ENCODE measurements at regions of chr5 and their contacts with region 1.

Region 1: DNA sequence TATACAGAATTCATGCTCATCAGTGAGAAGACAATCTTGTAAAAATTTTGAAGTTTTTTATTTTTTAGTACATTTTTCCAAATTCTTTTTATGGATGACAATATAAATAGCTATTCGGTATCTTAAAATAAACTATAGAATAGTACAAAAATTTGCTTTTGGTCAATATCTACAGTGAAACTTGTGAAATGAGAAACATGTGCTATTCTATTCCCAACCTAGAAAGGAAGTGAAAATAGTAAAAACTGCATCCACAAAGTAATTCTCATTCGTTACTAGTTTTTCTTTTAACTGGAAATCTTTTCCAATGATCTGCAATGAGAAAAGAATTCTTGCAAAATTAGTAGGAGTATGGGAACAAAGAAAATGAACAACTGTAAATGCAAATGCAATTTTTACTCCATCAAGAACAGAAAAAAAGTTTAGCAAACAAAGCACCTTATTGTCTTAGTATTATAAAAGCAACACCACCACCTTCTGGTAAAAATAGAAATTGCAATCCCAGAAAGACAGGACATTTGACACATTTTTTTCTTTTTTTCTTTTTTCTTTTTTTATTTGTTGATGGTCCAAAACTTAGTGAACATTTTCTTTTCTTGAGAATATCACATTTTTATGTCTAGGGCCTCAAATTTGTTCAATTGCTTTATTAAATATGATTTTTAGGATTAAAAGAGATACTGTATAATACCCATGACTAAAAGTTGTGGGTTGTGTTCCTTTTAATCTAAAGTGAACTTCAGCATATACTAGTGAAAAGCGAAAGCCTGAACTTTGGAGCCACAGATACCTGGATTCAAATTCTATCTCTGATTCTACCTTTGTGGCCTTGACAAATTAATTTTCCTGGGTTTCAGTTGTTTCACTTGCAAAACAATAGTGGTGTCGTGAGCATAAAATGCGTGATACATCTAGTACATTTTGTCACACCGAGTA is 72.3 kb downstream of the SLCO4C1 start:
- DNase-seq: peak in 1 of 2 donors; percentile 57
- ATAC-seq: peak in 1 of 3 donors; percentile 59
- H3K4me3 ChIP-seq: no peak overlapping the region
- H3K4me3 Mint-ChIP-seq: no peak overlapping the region
- H3K27ac ChIP-seq: no peak overlapping the region
- H3K27ac Mint-ChIP-seq: no peak overlapping the region
- H3K4me1 ChIP-seq: no peaks in the 10 kb centered on the region
- H3K4me1 Mint-ChIP-seq: peaks cover 3 to 4% of the 10 kb centered on the region in 2 donors
- H3K27me3 ChIP-seq: peaks cover 5% of the 10 kb centered on the region
- H3K27me3 Mint-ChIP-seq: peaks cover 4 to 12% of the 10 kb centered on the region in 2 donors
- CTCF ChIP-seq: peak; percentile 90

Region 2: DNA sequence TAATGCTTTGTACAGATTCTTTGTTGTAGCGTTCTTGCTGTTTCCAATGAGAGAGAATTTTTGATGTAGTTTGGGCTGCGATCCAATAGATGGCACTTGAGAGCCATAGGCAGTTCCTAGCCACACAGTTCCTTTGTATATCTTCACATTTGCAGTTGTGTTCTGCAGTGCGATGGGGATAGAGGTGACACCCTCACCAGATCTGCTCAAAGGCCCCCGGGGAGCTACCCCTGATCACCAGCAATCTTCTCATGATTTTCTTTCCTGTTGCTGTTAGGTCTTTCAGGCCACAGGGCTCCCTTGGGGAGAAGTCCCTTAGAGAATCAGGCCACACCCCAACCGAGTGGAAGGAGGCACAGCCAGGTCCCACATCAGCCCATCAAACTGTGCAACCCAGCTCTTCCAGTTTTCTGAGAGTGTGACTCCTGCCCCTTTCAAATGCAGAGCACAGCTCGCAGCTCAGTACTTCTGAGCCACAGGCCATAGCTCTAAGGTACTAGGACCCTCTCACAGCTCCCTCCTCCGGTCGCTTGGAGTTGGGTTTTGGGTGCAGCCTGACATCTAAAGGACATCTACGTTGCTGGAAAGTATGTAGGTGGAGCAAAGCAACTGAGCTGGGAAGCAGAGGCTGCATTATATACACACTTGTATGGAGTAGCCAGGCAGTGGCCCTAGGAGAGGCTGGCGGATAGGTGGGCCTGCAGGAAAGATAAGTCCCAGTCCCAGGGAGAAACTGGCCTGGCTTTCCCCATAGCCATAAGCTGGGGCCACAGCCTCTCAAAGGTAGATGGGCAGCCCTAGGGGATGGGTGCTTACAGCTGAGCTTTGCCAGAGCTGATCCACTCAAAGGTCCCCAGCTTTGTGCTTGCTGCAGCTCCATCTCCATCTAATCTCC is 281.2 kb before region 1 on chr5:
- intact Hi-C with region 1: loop called (anchors 1 kb)
- DNase-seq: peak in 1 of 2 donors; percentile 10
- ATAC-seq: peak in 1 of 3 donors; percentile 62
- H3K4me3 ChIP-seq: no peak overlapping the region
- H3K4me3 Mint-ChIP-seq: no peak overlapping the region
- H3K27ac ChIP-seq: no peak overlapping the region
- H3K27ac Mint-ChIP-seq: no peak overlapping the region
- H3K4me1 ChIP-seq: no peaks in the 10 kb centered on the region
- H3K4me1 Mint-ChIP-seq: peaks cover 0 to 5% of the 10 kb centered on the region in 2 donors
- H3K27me3 ChIP-seq: no peaks in the 10 kb centered on the region
- H3K27me3 Mint-ChIP-seq: no peaks in the 10 kb centered on the region
- CTCF ChIP-seq: peak; percentile 42

Region 3: GRCh38 chr5:102971697-102972293 is 748.0 kb after region 1 on chr5:
- intact Hi-C with region 1: no loop called
- DNase-seq: peak in 1 of 2 donors; percentile 35
- ATAC-seq: peak; percentile 63 to 67 (median 67)
- H3K4me3 ChIP-seq: no peak overlapping the region
- H3K4me3 Mint-ChIP-seq: no peak overlapping the region
- H3K27ac ChIP-seq: no peak overlapping the region
- H3K27ac Mint-ChIP-seq: peak overlapping the region in 1 of 2 donors; percentile 38
- H3K4me1 ChIP-seq: no peaks in the 10 kb centered on the region
- H3K4me1 Mint-ChIP-seq: peaks cover 9 to 16% of the 10 kb centered on the region in 2 donors
- H3K27me3 ChIP-seq: no peaks in the 10 kb centered on the region
- H3K27me3 Mint-ChIP-seq: no peaks in the 10 kb centered on the region
- CTCF ChIP-seq: peak; percentile 35